MCF 10A (cell line): ENCODE measurements at regions of chr17 and their contacts with region 1.

Region 1: DNA sequence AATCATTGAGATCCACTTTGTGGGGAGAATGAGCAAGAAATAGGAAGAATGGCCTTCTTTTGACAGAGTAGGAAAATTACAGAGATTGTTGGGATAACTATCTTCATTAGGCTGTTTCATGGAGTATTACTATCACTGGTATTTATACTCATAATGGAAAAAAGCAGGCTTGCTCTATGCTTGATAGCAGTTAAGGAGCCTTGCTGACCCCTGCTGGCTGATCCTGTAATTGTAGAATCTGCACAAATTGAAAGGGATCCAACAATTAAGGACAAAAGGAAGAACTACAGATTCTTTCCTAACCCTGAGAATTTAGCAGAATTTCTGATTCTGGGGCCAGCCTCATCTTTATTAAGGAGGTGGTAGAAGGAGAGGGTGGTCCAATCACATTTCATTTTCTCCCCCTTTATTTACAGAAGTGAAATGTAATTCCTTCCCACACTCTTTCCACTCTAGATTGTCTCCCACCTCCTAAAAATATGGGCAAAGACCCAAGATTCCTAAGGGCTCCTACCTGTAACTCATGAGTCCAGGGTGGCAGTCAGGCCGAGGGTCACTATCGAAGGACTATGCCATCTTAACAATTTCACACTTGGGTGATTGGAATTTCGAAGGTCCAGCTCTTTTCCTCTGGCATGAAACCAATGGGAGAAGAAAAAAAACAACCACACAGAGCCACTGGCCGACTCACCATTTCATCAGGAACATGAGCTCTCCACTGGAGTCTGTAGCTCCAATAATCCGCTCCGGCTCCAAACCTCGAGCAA is 26.3 kb downstream of the NFE2L1 start:
- DNase-seq: peak; percentile 83
- H3K4me3 Mint-ChIP-seq: no peak overlapping the region
- H3K27ac Mint-ChIP-seq: peak overlapping the region; percentile 42
- H3K4me1 Mint-ChIP-seq: peaks cover 9% of the 10 kb centered on the region
- H3K27me3 Mint-ChIP-seq: no peaks in the 10 kb centered on the region
- CTCF ChIP-seq: peak; percentile 54

Region 2: DNA sequence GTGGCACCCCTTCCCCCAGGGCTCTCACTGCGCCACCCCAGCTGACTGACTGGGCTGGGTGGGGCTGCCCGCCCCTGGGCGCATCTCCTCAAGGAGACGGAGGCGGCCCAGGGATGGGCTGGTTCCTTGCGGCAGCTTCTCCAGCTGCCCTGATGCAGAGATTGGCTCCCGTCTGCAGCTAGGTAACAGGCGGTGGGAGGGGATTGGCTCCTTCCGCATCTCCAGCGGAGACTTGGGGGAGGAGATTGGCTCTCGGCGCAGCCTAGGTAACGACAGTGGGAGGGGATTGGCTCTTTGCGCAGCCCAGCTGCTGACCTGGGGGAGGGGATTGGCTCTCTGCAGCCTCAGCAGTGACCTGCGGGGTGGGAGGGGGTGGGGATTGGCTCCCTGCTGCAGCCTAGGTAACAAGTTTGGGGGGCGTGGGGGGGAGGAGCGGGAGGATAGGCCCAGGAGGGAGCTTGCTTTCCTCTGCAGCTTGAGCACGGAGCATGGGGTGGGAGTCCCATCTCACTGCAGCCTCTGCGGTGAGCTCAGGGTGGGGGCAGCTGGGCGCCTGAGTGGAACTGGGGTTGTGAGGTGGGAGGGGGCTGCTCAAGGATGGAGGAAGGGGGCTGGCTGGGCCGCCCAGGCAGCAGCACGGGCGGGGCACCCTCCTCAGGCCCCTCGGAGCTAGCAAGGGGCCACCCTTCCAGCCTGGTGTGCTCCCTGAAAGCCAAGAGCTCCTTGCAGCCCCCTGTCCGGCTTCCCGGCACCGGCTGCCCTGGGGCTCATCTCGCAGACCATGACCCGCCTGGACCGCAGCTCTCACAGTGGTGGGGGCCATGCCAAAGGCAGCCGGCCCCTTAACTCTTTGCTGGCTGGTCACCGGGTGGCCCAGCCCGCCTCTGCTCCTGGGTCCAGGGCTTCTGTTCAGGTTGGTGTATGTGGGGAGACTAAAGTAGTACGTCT is 20.0 kb before region 1 on chr17:
- CTCF ChIA-PET with region 1: interaction called, 26 read pairs
- POLR2A ChIA-PET with region 1: interaction called, 353 read pairs
- intact Hi-C with region 1: no loop called
- DNase-seq: peak; percentile 76
- H3K4me3 Mint-ChIP-seq: peak overlapping the region; percentile 91
- H3K27ac Mint-ChIP-seq: peak overlapping the region; percentile 93
- H3K4me1 Mint-ChIP-seq: peaks cover 67% of the 10 kb centered on the region
- H3K27me3 Mint-ChIP-seq: no peaks in the 10 kb centered on the region
- CTCF ChIP-seq: no peak

Region 3: DNA sequence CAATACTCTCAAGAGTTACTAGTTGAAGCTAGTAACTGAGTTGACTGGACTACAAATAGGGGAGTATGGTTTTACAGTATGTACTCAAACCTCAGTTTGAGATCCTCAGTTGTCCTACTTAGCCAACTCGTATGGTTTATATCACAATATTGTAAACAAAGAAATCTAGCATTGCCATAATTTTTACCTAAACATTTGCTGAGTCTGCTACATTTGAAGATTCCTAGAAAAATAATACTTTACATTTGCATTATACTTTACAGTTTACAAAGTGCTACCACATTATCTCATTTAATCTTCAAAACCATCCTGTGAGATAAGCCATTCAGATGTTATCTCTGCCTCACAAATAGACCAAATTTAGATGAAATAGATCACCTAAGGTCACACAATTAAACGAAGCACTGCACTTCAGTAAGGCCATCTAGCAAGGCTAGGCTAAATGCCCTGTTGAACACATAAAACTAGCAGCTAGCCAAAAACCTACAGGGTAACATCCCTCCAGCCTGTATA is 10.5 kb after region 1 on chr17:
- CTCF ChIA-PET with region 1: interaction called, 13 read pairs
- POLR2A ChIA-PET with region 1: no interaction called
- intact Hi-C with region 1: no loop called
- DNase-seq: no peak
- H3K4me3 Mint-ChIP-seq: no peak overlapping the region
- H3K27ac Mint-ChIP-seq: no peak overlapping the region
- H3K4me1 Mint-ChIP-seq: no peaks in the 10 kb centered on the region
- H3K27me3 Mint-ChIP-seq: no peaks in the 10 kb centered on the region
- CTCF ChIP-seq: no peak

Region 4: GRCh38 chr17:48107168-48108132 is 33.0 kb after region 1 on chr17 and contains the start of gene SNX11:
- CTCF ChIA-PET with region 1: interaction called, 34 read pairs
- POLR2A ChIA-PET with region 1: interaction called, 15 read pairs
- intact Hi-C with region 1: no loop called
- DNase-seq: peak; percentile 85
- H3K4me3 Mint-ChIP-seq: peak within 1 kb of the TSS; percentile 98
- H3K27ac Mint-ChIP-seq: peak within 1 kb of the TSS; percentile 87
- H3K4me1 Mint-ChIP-seq: peaks cover 21% of the 10 kb centered on the region
- H3K27me3 Mint-ChIP-seq: no peaks in the 10 kb centered on the region
- CTCF ChIP-seq: no peak
- total RNA-seq, gene SNX11: 21.7 and 24.2 TPM in 2 replicates

Region 5: DNA sequence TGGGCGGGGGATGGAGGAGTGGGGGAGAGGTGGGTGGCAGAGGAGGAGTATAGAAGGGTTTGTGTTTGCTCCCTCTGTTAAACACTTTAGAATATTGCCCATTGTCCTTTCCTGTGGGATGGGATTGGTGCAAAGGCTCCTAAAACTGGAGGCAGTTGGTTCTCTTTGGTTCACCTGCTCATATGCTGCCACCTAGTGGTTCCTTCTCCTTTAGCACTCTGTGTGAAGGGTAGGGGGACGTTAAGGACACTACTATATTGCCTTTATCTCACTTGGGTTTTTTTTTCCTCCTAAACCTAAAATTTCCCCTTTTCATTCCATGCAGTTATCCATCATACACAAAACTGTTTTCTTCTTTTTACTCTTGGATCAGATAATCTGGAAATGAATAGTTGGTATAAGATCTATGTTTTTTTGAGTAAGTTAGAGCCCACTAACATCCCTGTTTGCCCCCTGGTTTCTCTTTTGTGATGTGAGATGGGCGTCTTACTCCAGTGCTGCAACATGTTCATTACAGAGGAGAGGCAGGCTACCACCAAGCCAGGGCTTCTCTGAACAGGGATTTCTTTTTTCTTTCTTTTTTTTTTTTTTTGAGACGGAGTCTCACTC is 56.8 kb after region 1 on chr17:
- CTCF ChIA-PET with region 1: interaction called, 72 read pairs
- POLR2A ChIA-PET with region 1: interaction called, 4 read pairs
- intact Hi-C with region 1: no loop called
- DNase-seq: peak; percentile 85
- H3K4me3 Mint-ChIP-seq: no peak overlapping the region
- H3K27ac Mint-ChIP-seq: no peak overlapping the region
- H3K4me1 Mint-ChIP-seq: peaks cover 13% of the 10 kb centered on the region
- H3K27me3 Mint-ChIP-seq: no peaks in the 10 kb centered on the region
- CTCF ChIP-seq: peak; percentile 76